H1 (cell line): ENCODE measurements at regions of chr20 and their contacts with region 1.

Region 1: DNA sequence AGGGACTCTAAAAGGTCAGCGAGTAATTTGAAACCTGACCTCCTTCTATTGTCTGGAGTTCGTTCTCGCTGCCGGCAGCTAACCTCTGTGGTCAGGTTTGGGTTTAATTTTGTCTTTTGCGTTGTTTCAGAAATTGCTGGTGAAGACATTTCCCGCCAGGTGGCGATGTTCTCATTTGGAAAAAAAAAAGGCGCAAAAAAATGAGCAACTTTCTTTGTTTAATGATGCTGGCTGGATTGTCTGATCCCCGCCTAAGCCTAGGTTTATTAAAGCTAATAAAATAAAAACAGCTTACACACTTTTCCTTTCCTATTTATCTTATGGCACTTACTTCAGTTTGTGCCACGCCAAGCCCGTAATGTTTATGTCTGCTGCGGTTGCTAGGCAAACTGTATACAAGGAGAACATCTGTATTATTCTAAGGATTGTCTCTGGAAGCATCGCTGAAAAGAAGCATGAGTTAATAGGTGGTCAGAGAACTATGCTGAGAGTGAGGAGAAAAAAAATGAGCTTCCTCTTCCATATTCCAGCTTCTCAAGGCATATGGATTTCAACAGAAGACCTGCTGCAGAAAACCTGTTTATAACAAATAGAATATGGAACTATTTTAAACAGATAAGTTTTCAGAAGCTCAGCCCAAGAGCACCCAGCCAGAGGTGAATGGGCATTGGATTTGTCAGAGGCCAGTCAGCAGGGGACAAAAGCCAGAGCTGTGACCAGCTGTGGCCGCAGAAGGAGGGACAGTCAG is 205.7 kb downstream of the DOK5 start:
- DNase-seq: peak in 1 of 2 experiments; percentile 70
- H3K4me3 ChIP-seq: no peak overlapping the region
- H3K27ac ChIP-seq: no peak overlapping the region
- H3K4me1 ChIP-seq: no peaks in the 10 kb centered on the region; a peak in 1 of 7 replicates
- H3K27me3 ChIP-seq: 0 out of 7 replicates have a peak, but pooled peaks cover 0 to 2% (median 0%) of the 10 kb centered on the region in 4 experiments
- CTCF ChIP-seq: peak in 2 of 3 experiments; percentile 55 to 56; a peak in 3 of 4 replicates
- EP300 ChIP-seq: no peak
- POLR2A ChIP-seq: no peak
- RAD21 ChIP-seq: peak; percentile 76 to 84

Region 2: DNA sequence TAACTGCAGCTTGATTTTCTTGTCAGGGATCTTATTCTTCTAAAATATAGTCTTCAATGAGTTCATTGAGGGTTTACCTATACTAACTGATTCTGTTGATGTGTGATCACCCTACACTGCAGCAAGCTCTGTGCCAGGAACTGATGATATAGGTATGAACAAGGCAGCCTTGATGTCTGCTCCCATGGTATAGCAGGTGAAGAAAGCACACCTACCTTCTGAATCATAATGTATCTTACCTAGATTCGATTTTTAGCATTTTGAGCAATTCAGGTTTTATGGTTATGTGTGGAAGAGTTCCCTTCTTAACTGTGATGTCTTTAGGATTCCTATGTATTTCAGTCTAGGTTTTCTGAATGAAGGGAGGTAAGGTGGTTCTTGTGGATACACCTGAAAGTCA is 17.3 kb after region 1 on chr20:
- CTCF ChIA-PET with region 1: interaction called, 11 read pairs
- POLR2A ChIA-PET with region 1: no interaction called
- DNase-seq: no peak
- H3K4me3 ChIP-seq: no peak overlapping the region
- H3K27ac ChIP-seq: no peak overlapping the region
- H3K4me1 ChIP-seq: no peaks in the 10 kb centered on the region
- H3K27me3 ChIP-seq: no peaks in the 10 kb centered on the region
- CTCF ChIP-seq: no peak
- EP300 ChIP-seq: no peak
- POLR2A ChIP-seq: no peak
- RAD21 ChIP-seq: no peak

Region 3: DNA sequence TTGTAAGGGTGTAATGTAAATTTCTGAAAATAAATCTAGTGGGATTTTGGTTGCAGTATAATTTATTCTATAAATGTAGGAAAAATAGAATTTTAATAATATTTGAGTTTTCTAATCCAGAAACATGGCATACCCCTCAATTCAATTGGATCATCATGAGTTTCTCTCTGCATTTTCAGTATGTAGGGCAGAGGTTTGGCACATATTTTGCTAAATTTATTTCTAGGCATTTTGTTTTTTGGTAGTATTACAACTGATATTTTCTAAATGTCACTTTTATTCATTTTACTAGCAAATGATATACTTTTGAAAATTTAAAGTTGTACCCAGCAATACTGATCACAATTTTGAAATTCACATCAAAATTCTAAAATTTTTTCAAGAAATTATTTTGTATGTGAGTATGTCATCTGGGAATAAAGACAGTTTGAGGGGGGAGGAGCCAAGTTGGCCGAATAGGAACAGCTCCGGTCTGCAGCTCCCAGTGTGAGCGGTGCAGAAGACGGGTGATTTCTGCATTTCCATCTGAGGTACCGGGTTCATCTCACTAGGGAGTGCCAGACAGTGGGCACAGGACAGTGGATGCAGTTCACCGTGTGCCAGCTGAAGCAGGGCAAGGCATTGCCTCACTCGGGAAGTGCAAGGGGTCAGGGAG is 101.2 kb after region 1 on chr20:
- CTCF ChIA-PET with region 1: no interaction called
- POLR2A ChIA-PET with region 1: no interaction called
- DNase-seq: no peak
- H3K4me3 ChIP-seq: no peak overlapping the region
- H3K27ac ChIP-seq: no peak overlapping the region
- H3K4me1 ChIP-seq: no peaks in the 10 kb centered on the region
- H3K27me3 ChIP-seq: no peaks in the 10 kb centered on the region
- CTCF ChIP-seq: no peak
- EP300 ChIP-seq: no peak
- POLR2A ChIP-seq: no peak
- RAD21 ChIP-seq: no peak